GM10248 (cell line): ENCODE measurements at regions of chr6 and their contacts with region 1.

Region 1: GRCh38 chr6:33126101-33126714 is 50.4 kb downstream of the HLA-DPB1 start:
- DNase-seq: peak; percentile 64
- CTCF ChIP-seq: peak; percentile 58

Region 2: DNA sequence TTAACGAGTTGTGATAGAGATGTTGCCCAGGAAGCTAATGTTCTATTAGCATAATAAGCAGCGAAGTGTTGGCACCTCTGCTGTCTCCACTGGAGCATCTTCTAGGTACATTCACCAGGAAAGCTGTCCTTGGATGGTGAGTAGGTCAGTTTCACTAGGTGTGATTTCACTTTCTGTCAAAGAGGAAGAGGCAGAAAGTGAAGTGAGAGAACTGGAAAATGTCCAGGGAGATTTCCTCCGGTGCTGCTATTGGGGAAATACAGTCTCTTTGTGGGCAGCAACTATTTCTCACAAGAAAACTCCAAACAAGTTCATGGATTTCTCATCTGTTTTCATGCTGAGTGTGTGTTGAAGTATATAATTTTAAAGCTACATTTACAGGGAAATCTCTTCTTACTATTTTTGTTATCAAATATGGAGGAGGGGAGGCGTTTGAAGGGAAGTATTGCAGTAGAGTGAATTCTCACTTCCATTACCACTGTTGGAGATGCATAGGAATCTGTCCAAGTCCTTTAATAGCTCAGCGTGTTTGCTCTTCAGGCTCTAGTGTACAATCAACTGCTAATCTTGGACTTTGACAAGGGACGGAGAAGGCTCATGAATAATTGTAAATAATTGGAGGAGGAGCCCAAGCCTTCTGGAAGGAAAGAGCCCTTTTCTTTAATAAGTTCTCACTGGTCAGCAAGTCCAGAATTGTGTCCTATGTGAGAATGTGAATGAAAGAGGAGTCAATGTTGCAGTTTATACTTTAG is 738.4 kb before region 1 on chr6:
- CTCF ChIA-PET with region 1: no interaction called
- POLR2A ChIA-PET with region 1: no interaction called
- DNase-seq: no peak
- CTCF ChIP-seq: no peak

Region 3: GRCh38 chr6:32774426-32774825 is 351.8 kb before region 1 on chr6:
- CTCF ChIA-PET with region 1: no interaction called
- POLR2A ChIA-PET with region 1: no interaction called
- DNase-seq: no peak
- CTCF ChIP-seq: no peak

Region 4: GRCh38 chr6:33112148-33112547 is 14.1 kb before region 1 on chr6:
- CTCF ChIA-PET with region 1: interaction called, 66 read pairs
- POLR2A ChIA-PET with region 1: no interaction called
- DNase-seq: peak; percentile 83
- CTCF ChIP-seq: no peak

Region 5: GRCh38 chr6:33139596-33140206 is 13.5 kb after region 1 on chr6:
- CTCF ChIA-PET with region 1: interaction called, 89 read pairs
- POLR2A ChIA-PET with region 1: no interaction called
- DNase-seq: no peak
- CTCF ChIP-seq: no peak